HEK293 (cell line): ENCODE measurements at regions of chr17 and their contacts with region 1.

Region 1: DNA sequence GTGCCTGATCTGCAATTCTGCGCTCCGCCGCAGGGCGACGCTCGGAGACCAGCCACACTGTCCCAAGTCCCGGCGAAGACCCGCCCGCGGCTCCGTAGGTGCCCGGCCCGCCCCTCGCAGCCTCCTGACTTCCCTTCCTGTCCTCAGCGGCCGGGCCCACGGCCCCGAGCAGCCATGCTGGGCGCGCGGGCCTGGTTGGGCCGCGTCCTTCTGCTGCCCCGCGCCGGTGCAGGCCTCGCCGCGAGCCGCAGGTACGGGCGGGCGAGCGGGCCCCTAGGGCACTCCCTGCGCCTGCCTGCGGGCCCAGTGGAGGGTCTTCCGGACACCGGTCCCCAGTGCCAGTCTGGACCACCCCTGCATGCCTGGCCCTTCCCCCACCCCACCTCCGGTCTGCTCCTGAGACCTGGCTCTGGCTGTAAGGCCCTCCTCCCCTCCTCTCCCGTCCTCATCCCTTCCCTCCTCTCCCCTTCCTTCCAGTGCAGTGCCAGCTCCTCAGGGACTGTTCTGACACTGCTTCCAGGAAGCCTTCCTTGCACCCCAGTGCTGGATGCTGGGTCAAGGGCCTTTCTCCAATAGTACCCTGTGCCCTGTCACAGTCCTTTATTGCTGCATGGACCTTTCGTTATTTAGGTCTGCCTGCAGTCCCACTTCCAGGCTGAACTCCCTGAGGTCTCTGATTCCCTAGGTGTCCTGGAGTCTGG is at the start of gene SPATA20:
- H3K4me3 ChIP-seq: peak within 1 kb of the TSS; percentile 53
- H3K27ac ChIP-seq: peak within 1 kb of the TSS; percentile 73
- H3K4me1 ChIP-seq: peaks cover 16% of the 10 kb centered on the region
- CTCF ChIP-seq: peak; percentile 94

Region 2: DNA sequence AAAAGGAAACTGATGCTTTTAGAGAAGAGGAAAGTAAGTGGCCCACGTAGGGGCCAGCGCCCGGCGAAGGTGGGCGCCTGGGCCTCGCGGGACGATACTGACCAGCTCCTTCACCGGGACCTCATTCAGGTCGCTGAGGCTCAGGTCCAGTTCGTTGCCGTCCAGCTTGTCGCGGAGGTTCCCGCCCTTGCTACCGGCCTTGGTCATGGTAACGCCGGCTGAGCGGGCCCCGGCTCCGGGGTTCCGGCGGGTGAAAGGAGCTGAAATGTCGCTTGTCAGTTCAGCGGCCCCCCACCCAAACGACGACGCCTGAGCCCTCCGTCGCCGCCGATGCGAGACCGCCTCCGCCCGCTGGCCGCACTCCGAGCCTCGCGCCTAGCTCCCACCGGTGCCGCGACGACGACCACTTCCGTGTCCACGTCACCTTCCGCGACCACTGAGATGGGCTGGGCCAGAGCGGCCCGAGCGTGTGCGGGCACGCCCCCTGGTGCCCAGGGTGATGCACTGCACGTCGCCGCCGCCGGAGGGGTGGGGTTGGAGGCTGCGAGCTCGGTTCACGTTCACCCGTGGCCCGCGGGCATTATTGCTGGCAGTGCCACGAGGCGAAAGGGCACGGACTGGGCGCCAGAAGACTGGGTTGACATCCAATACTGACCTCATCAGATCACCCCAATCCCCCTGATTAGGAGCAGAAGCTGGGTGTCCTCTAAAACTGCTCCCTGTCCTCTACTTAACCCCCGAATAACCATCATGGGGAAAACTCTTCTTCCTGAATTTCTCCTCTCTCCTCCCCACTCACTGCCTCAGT is 149.9 kb before region 1 on chr17 and contains the start of gene LRRC59:
- CTCF ChIA-PET with region 1: no interaction called
- POLR2A ChIA-PET with region 1: no interaction called
- H3K4me3 ChIP-seq: peak within 1 kb of the TSS; percentile 74
- H3K27ac ChIP-seq: peak within 1 kb of the TSS; percentile 81
- H3K4me1 ChIP-seq: peaks cover 9% of the 10 kb centered on the region
- CTCF ChIP-seq: peak; percentile 100

Region 3: DNA sequence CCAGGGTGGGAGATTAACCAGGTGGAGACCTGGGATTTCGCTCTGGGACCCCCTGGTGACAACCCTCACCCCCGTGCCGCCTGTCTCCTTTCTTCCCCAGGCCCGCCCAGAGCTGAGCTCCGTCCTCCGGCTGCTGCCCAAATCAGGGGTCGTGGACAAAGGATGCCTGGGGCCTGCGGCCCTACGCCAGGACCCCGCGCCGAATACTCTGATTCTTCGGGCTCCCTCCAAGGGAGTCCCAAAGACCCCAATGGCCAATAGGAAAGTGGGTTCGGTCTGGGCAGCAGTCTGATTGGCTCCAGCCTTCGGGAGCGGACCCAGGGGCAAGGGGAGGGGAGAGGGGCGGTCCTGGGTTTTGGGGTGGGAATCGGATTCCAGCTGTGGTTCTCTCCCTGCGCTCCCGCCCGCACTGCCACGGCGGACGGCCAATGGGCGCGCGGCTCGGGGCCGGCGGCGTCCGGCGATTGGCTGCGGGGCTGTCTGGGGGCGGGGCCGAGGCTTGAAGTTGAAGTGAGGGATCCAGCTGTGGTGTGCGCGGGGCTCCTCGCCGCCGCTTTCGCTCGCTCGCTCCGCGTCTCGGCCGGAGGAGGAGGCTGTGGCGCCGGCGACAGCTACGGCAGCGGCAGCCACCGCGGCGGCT is 13.1 kb after region 1 on chr17 and contains the start of gene CACNA1G:
- CTCF ChIA-PET with region 1: interaction called, 24 read pairs
- POLR2A ChIA-PET with region 1: interaction called, 13 read pairs
- H3K4me3 ChIP-seq: peak within 1 kb of the TSS; percentile 38
- H3K27ac ChIP-seq: no peak within 1 kb of the TSS; the same call in 1 of the 2 replicates
- H3K4me1 ChIP-seq: peaks cover 5% of the 10 kb centered on the region; the same call in 1 of the 2 replicates
- CTCF ChIP-seq: no peak

Region 4: DNA sequence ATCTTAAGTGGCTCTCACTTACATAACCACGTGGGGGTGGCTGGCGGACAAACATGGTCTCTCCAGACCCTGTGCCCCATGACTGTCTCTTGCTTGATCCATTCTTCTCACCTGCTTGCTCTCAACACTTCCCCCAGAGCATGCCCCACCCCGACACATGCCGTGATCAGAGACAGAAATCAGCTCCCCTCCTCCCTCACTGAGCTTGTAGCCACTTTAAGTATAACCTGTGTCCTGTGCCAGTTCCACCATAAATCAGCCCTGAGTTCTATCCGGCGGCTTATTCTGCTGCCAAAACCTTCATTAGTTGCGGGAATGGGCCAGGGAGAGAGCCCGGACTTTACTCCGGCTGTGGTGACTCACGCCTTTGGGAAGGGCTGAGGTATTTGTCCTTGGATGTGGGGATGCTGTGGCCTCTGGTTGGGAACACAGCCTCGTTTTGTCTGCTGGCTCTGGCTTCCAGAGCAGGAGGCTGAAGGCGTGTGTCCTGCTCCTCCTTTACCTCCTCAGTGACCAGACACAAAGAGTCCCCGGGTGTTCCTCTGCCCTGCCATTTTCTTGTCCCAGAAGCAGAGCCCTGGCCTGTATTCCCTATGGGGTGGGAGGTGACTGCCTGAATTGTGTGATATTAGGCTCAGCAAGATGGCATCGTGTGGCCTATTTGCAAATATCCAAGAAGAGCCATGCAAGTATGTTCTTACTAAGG is 139.5 kb after region 1 on chr17:
- CTCF ChIA-PET with region 1: interaction called, 86 read pairs
- POLR2A ChIA-PET with region 1: interaction called, 3 read pairs
- H3K4me3 ChIP-seq: no peak overlapping the region
- H3K27ac ChIP-seq: no peak overlapping the region
- H3K4me1 ChIP-seq: peaks cover 6% of the 10 kb centered on the region; the same call in 1 of the 2 replicates
- CTCF ChIP-seq: no peak

Region 5: GRCh38 chr17:50707289-50708049 is 160.3 kb after region 1 on chr17 and contains the start of gene ANKRD40:
- CTCF ChIA-PET with region 1: interaction called, 27 read pairs
- POLR2A ChIA-PET with region 1: no interaction called
- H3K4me3 ChIP-seq: peak within 1 kb of the TSS; percentile 89
- H3K27ac ChIP-seq: peak within 1 kb of the TSS; percentile 99
- H3K4me1 ChIP-seq: peaks cover 9% of the 10 kb centered on the region
- CTCF ChIP-seq: peak; percentile 28; the same call in 1 of the 2 replicates

Region 6: DNA sequence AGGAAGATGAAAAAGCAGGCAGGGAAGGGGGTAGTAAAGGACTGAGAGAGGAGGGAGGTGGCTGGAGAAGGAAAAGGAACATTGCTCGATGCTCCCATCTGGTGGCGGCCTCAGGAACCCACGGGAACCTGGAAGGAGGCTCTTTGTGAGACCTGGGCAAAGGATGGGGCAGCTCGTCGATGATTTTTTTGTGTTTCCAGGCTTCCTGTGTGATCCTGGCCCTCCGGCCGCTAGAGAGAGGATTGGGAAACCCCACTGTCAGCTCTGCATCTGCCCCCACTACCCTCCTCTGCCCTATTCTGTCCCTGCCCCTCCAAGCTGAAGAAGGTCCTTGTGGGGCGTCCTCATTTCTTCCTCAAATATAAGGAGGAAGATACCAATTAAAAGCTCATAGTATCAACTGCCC is 294.8 kb after region 1 on chr17:
- CTCF ChIA-PET with region 1: interaction called, 12 read pairs
- POLR2A ChIA-PET with region 1: no interaction called
- H3K4me3 ChIP-seq: no peak overlapping the region
- H3K27ac ChIP-seq: no peak overlapping the region
- H3K4me1 ChIP-seq: no peaks in the 10 kb centered on the region
- CTCF ChIP-seq: peak; percentile 82